ENCODE measurements at regions of chr11 and their contacts with region 1.

Region 1: DNA sequence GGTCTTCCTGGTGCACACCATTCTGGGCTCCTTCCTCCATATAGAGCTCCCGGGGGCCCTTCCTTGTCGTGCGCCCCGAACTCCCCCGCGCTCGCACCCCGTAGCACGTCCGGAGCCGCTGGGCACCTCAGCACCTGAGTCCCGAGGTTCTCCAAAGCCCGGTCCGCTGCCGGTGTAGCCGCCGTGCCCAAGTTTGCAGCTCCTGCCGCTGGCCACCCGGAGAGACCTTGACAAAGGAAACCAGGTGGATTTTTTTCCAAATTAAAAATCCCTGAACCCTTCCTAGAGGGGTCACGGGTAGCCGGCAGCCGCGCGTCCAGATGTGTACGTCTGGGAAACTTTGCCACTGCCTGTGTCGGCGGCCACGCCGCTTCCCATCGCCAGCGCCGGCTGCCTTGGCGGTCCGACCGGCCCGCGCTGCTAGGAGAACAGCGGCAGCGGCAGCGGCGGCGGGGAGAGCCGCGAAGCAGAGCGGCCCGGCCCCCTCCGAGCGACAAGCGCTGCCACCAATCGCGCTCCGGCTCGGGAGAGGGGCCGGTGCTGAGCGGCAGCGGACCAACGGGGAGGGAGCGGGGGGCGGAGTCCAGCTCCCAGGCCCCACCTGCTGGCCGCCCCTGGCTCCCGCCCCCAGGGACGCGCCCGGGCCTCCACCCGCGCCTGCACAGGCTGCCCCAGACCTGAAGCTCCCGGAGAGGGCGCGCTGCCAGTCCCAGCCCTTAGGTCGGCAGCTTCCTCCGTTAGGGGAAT is at the start of gene GALNT18:
- DNase-seq: peak; percentile 93
- ATAC-seq: peak; percentile 98
- total RNA-seq, gene GALNT18: 22.9 TPM

Region 2: GRCh38 chr11:11036848-11037732 is 584.7 kb before region 1 on chr11:
- intact Hi-C with region 1: loop called (anchors 5 kb)
- DNase-seq: no peak
- ATAC-seq: peak; percentile 52

Region 3: DNA sequence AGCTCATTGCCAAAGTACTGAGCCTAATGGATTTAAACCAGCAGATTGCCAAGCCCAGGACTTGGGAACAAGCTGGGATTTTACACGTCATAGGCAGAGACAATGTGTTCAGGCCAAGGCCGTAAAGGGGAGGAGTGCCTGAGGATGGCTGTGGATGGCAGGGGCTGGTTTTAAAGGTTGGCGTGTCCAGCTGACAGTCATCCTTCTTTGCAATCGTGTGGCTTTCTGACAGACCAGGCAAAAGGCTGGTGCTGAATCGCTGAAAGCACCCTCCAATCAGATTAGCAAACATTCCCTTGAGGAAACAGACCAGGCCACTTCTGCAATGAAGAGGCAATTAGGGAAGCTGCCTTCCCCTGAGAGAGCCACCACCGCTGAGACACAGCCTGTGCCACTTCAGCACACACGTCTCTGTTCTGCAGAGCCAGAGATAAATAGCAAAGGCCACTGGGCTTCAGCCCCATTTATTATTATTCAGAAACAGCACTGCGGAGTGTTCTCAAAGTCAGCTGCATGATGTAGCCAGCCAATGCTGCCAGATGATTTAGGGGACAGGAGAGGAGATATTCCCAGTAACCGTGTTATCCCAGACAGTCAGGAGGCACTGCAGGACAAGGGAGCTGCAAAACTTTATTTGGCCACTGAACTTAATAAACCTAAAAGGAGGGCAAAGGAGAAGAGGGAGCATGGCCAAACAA is 214.5 kb before region 1 on chr11:
- intact Hi-C with region 1: loop called (anchors 1 kb)
- DNase-seq: no peak
- ATAC-seq: peak; percentile 85

Region 4: DNA sequence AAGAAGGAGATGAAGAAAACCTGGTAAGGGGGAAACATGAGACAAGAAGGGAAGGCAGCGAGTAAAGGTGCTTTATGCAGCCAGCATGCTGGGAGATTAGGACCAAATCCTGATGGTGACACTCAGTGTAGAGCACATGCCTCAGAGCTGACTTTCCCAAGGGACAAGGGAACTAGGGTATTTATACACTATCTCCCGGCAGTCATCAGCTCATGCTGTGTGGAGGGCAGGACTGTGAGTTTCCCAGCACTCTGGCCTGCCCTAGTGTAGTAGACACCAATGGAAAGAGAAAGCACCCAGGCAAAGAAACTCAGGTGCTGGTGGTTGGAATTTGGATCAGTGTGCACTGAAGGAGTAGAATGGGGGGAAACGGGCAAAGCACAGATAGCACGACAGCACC is 140.4 kb before region 1 on chr11:
- intact Hi-C with region 1: loop called (anchors 5 kb)
- DNase-seq: no peak
- ATAC-seq: peak; percentile 92

Region 5: GRCh38 chr11:11538277-11538960 is 83.3 kb before region 1 on chr11:
- intact Hi-C with region 1: loop called (anchors 2 kb)
- DNase-seq: peak; percentile 77
- ATAC-seq: peak; percentile 86

Region 6: DNA sequence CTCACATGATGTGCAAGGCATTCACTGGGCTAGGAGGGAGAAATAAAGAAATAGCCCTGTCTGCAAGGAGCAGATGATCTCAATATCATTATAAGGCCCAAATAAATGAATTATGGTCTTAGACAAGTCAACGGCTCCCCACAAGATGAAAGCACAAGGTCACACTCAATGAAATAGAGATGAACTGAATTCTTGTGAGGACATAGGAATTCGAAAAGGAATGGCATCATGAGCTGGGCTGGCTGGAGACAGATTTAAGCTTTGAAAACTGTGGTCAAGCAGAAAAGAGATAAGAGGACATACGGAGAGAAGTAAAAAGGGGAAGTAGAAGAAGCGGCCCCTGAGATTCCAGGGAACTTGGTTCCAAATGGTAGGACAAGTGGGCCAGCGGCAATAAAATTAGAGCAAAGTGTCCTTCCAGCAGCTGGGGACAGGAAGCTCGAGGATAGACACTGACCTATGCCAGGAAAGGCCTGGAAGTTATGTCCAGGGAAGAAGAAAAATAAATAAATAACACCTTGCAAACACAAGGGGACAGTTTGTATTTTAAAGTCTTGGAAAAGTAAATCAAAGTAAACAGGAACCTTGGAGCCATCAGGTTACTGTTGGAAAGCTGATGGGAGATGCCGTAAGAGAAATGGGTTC is 37.8 kb before region 1 on chr11:
- intact Hi-C with region 1: loop called (anchors 1 kb)
- DNase-seq: no peak
- ATAC-seq: no peak

Measured in Right ventricle myocardium inferior (tissue), 1 donor.